Sigmoid colon (tissue), 7 donors: ENCODE measurements at regions of chr14 and their contacts with region 1.

Region 1: DNA sequence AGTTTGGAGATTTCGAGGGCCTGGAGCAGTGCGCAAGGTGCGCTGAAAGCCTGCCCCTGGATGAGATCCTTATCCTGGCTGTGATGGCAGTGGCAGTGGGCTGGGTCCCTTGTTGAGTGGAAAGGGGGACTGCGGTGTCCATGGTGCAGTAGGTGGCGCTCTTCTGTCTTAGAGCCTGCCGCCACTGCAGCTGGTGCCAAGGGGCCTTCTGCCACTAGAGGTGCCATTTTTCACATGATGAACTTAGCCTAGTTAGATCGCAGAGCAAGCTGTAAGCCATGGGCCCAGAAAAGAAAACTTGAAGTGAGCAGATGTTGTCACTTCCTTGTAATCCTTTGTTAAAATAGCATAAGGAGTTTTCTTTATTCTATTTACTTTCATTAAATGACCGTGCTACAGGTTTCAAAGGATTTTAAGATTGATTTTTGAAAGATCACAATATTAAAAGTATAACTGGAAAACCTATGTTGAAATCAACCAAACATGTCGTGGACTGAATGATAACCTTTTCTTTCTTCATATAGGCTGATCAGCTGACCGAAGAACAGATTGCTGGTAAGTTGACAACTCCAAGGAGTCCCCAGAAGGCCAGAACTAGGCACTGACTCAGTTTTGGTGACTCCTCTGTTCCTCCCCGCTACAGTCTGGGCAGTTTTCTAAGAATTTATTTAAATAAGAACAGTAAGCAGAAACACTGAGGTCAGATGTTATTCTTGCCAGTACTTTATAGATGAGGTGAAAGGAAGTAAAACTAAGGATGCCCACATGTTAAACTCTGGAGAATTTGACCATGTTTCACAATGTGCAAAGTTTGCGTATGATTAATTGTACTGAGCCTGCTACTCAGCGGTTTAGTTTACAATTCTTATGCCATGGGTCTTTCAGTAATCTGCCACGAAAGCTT is 3.0 kb downstream of the CALM1 start:
- DNase-seq: peak; percentile 97
- H3K4me3 ChIP-seq: peak overlapping the region; percentile 89 to 97 (median 97)
- H3K27ac ChIP-seq: peak overlapping the region; percentile 94 to 97 (median 95)
- H3K4me1 ChIP-seq: peaks cover 0 to 67% (median 58%) of the 10 kb centered on the region in 4 donors
- H3K27me3 ChIP-seq: no peaks in the 10 kb centered on the region
- CTCF ChIP-seq: peak; percentile 98 to 100 (median 98)
- EP300 ChIP-seq: peak in 1 of 4 donors; percentile 21
- POLR2A ChIP-seq: peak in 1 of 2 donors; percentile 28

Region 2: DNA sequence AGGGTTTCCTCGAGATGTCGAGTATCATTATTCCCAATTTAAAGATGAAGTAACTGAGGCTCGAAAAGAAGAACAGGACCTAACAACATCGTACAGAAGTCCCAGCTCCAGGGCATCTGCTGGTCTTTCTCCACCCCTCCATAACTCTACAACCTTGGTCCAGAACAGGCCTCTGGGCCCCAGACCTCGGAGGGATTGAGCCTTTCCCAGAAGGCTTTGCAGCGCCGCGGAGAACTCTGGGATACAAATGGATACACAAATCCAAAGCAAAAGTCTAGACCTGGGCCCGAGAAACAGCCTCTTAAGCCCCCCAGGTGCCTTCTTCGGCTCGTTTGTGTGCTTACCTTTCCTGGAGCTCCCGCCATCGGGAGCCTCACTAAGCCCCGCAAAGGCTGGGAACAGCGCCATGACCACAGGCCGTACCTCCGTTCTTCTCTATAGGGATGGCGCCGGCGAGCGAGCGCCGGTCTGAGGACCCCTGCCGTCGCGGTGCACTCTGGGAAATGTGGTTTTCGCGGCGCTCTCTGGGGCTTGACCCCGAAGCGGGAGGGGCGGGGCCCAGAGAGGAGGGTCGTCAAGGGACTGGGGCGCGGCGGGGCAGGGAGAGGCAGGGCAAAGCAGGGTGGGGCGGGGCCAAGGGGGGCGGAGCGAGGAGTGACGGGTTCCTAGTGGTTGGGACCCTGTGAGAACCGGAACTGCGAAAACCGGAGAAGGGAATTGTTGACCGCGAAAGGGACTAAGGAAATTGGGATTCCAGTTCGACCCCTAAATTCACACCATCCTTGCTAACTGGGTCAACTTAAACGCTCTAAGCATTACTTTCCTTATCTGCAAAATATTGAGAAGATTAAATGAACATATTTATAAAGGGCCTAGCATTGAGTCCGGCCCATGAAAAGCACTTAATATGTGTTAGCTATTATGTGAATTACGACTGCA is 68.0 kb before region 1 on chr14 and contains the start of gene NRDE2:
- intact Hi-C with region 1: loop called (anchors 5 kb)
- DNase-seq: peak; percentile 99
- H3K4me3 ChIP-seq: peak within 1 kb of the TSS; percentile 50 to 62 (median 58)
- H3K27ac ChIP-seq: peak within 1 kb of the TSS; percentile 77 to 86 (median 82)
- H3K4me1 ChIP-seq: peaks cover 0 to 15% (median 10%) of the 10 kb centered on the region in 4 donors
- H3K27me3 ChIP-seq: no peaks in the 10 kb centered on the region
- CTCF ChIP-seq: no peak
- EP300 ChIP-seq: peak in 2 of 4 donors; percentile 13 to 26
- POLR2A ChIP-seq: no peak
- total RNA-seq, gene NRDE2: 12.5 to 25.2 (median 14.8) TPM

Region 3: GRCh38 chr14:90518941-90519256 is 119.1 kb after region 1 on chr14:
- intact Hi-C with region 1: loop called (anchors 2 kb)
- DNase-seq: no peak
- H3K4me3 ChIP-seq: no peak overlapping the region
- H3K27ac ChIP-seq: peak overlapping the region; percentile 70 to 90 (median 80)
- H3K4me1 ChIP-seq: peaks cover 0 to 74% (median 63%) of the 10 kb centered on the region in 4 donors
- H3K27me3 ChIP-seq: no peaks in the 10 kb centered on the region
- CTCF ChIP-seq: peak in 3 of 4 experiments; percentile 14 to 43 (median 30)
- EP300 ChIP-seq: no peak
- POLR2A ChIP-seq: no peak

Region 4: GRCh38 chr14:90645842-90646443 is 246.2 kb after region 1 on chr14:
- intact Hi-C with region 1: loop called (anchors 5 kb)
- DNase-seq: no peak
- H3K4me3 ChIP-seq: no peak overlapping the region
- H3K27ac ChIP-seq: peak overlapping the region; percentile 75 to 86 (median 81)
- H3K4me1 ChIP-seq: peaks cover 0 to 66% (median 57%) of the 10 kb centered on the region in 4 donors
- H3K27me3 ChIP-seq: no peaks in the 10 kb centered on the region
- CTCF ChIP-seq: no peak
- EP300 ChIP-seq: no peak
- POLR2A ChIP-seq: no peak

Region 5: DNA sequence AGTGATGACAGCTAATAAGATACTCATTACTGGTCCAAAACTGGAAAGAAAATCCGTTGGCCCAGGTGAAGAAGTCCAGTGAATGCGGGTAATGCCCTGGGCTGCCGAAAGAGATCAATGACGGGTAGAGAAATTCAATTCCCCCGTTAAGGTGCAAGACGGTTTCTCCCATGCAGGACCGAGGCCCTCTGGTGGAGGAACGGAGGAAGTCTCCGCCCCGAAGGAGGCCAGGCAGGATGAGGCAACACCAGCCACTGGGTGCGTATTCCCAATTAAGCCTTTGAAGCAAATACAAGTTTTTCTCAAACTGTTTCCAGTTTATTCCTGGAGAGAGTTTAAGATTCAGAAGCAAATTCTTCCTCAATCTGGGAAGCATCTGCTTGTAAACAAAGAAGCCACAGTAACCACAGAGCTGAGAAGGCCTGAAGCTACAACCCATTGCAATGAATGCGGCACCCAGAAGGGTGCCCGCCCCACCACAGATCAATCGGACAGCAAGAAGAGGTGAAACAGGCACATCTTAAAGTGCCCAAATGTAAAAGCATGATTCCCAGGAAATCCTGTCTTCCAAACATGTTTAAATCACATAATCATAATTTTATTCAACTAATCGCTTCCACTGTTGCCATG is 297.9 kb after region 1 on chr14:
- intact Hi-C with region 1: loop called (anchors 1 kb)
- DNase-seq: peak; percentile 95
- H3K4me3 ChIP-seq: no peak overlapping the region
- H3K27ac ChIP-seq: peak overlapping the region; percentile 76 to 86 (median 82)
- H3K4me1 ChIP-seq: peaks cover 0 to 39% (median 34%) of the 10 kb centered on the region in 4 donors
- H3K27me3 ChIP-seq: no peaks in the 10 kb centered on the region
- CTCF ChIP-seq: peak; percentile 86 to 97 (median 96)
- EP300 ChIP-seq: no peak
- POLR2A ChIP-seq: no peak

Region 6: GRCh38 chr14:90815822-90816700 is 416.3 kb after region 1 on chr14 and contains the start of gene TTC7B:
- intact Hi-C with region 1: loop called (anchors 5 kb)
- DNase-seq: peak; percentile 73
- H3K4me3 ChIP-seq: peak within 1 kb of the TSS; percentile 76 to 84 (median 80)
- H3K27ac ChIP-seq: peak within 1 kb of the TSS in 3 of 4 donors; percentile 55 to 66 (median 64)
- H3K4me1 ChIP-seq: peaks cover 0 to 20% (median 17%) of the 10 kb centered on the region in 4 donors
- H3K27me3 ChIP-seq: no peaks in the 10 kb centered on the region
- CTCF ChIP-seq: no peak
- EP300 ChIP-seq: no peak
- POLR2A ChIP-seq: no peak
- total RNA-seq, gene TTC7B: 46.8 to 70.9 (median 61.2) TPM